Head of caudate nucleus (tissue), 42 donors: ENCODE measurements at regions of chr6 and their contacts with region 1.

Region 1: GRCh38 chr6:57021086-57021720 is 25.3 kb upstream of the KIAA1586 start:
- DNase-seq: no peak

Region 2: DNA sequence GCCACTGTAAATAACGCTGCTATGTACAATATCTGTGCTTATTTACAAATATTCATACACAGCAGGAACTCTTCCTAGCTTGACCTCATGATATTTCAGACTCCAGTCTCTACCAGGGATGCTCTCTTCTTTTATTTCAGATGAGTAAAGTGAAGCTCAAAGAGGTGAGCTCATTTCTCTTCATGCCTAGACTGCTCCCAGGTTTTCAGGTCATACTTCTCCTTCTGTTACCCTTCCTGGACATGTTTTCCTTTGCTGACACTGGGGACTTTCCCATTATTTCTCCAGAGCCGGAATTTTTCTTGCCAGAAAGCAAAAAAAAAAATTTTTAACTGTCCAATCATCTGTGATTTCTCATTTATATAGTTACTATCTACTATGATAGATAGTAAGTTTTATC is 231.3 kb before region 1 on chr6:
- intact Hi-C with region 1: no loop called
- DNase-seq: no peak

Region 3: DNA sequence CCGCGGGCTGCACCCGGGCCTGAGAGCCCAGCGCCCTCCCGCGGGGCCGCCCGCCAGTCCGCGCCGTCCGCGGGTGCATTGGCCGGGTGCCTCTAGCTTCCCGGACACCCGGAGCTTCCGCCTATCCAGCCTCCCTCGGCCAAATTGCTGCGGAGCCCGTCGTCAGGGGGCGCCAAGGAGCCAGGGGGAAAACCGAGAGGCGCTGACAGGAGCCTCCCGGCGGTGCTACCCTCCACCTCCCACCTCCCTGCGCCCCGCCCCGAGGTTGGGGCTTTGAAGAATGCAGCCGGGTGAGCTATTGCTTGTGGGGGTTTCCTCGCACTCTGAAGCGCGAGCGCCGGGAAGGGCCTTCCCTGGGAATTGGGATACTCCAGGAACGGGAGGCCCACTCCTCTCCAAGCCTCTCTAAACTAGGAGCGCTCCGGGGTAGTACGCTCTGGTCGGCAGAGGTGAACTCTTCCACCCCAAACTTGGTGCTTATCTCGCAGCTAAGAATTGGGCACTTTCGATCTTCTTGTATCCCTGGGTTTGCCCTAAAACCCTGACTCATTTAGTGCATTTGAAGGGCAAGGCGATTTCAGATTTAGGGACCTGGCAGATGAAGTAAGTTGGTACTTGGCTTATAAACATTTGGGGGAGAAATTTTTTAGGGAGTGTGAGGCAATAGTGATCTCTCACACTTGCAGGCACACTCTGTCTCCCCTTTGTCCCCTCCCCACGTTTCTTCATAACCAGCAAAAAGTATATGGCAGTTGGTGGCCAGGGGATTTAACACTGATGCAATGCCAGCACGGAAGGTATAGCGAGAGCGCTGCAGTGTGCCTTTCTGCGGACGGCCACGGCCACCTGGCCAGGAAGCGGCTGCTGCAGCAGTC is 65.8 kb before region 1 on chr6:
- intact Hi-C with region 1: loop called (anchors 5 kb)
- DNase-seq: peak in 40 of 42 donors; percentile 64 to 94 (median 88)